A549 (cell line): ENCODE measurements at regions of chr15 and their contacts with region 1.

Region 1: GRCh38 chr15:81106560-81106959 is 27.5 kb upstream of the CFAP161 start:
- DNase-seq: peak; percentile 61 to 64
- ATAC-seq: peak; percentile 62 to 83
- H3K4me3 ChIP-seq: no peak overlapping the region
- H3K27ac ChIP-seq: no peak overlapping the region
- H3K4me1 ChIP-seq: no peaks in the 10 kb centered on the region
- CTCF ChIP-seq: peak; percentile 73
- EP300 ChIP-seq: no peak
- POLR2A ChIP-seq: no peak
- RAD21 ChIP-seq: peak; percentile 75 to 81

Region 2: DNA sequence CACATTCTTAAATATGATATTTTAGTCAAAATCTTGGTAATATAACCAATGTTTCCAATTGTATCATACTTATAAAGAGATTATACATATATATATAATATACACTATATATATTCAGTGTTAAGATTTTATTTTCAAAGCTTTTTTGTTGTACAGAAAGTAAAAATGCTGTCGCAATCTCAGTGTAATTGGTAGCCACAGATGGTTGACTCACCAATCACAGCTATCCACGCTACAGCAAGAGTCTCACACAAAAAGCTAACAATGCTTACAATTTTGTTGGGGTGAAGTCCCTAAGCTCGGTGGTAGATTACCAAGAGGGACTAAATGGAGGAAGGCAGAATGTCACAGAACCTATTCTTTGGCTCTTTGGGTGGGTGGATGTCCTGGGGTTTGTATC is 10.6 kb after region 1 on chr15:
- CTCF ChIA-PET with region 1: interaction called, 11 read pairs
- POLR2A ChIA-PET with region 1: no interaction called
- DNase-seq: no peak
- ATAC-seq: no peak
- H3K4me3 ChIP-seq: no peak overlapping the region
- H3K27ac ChIP-seq: no peak overlapping the region
- H3K4me1 ChIP-seq: no peaks in the 10 kb centered on the region
- CTCF ChIP-seq: no peak
- EP300 ChIP-seq: no peak
- POLR2A ChIP-seq: no peak
- RAD21 ChIP-seq: no peak